ENCODE measurements at regions of chr13 and their contacts with region 1.

Region 1: GRCh38 chr13:30341815-30342570 is 34.6 kb upstream of the KATNAL1 start:
- DNase-seq: peak; percentile 81
- ATAC-seq: peak; percentile 84 to 93 (median 88)
- H3K4me3 ChIP-seq: no peak overlapping the region
- H3K27ac ChIP-seq: peak overlapping the region; percentile 10 to 89 (median 77)
- H3K4me1 ChIP-seq: peaks cover 2 to 46% (median 32%) of the 10 kb centered on the region in 9 donors
- H3K27me3 ChIP-seq: no peaks in the 10 kb centered on the region
- CTCF ChIP-seq: no peak

Region 2: DNA sequence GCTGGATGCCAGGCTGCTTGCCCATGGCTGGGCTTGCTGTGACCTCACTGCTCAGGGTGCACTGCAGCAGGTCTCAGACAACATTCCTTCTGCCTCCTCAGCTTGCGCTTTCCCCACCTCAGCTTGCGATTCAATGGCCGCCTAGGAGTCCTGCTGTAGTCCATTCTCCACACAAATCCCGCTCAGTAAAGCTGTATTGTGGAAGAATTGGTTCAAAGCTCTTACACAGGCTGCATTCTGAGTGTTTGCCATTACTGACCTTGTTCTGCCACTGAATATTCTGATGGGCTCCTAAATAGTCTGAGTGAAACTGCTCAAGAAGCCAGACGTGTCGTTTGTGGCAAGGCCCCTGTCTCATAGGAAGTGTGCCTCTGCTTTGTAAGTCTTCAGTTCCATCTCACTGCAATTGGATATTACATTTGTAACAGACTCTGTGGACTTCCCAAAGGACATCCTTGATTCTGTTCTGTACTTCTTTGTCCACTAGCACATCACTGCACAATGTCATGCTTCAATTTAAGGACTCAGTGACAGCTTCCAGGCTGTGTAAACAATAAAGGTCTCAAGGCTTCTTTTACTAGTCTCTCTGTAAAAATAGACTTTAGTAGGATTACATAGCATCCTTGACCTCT is 84.4 kb before region 1 on chr13:
- intact Hi-C with region 1: loop called in 1 of 10 experiments (anchors 2 kb)
- DNase-seq: peak in 1 of 2 donors; percentile 3
- ATAC-seq: peak; percentile 25 to 92 (median 76)
- H3K4me3 ChIP-seq: no peak overlapping the region
- H3K27ac ChIP-seq: peak overlapping the region in 6 of 10 donors; percentile 13 to 70 (median 32)
- H3K4me1 ChIP-seq: peaks cover 0 to 22% (median 9%) of the 10 kb centered on the region in 9 donors
- H3K27me3 ChIP-seq: no peaks in the 10 kb centered on the region
- CTCF ChIP-seq: no peak

Region 3: DNA sequence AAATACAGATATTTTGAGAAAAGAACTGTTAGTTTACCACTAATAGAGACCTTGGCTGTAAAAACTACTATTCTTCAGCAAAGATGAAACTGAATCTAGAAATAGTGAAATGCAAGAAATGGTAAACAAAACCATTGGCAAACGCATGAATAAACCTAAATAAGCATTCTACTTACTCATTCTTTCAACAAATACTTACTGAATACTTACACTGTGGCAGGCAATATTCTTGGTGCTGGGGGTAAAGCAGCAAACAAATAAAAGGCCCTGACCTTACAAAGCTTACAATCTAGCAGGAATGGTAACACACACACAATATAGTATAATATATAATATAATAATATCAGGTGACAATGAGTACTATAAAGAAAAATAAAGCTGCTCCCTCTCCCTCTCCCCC is 73.3 kb before region 1 on chr13:
- intact Hi-C with region 1: no loop called
- DNase-seq: no peak
- ATAC-seq: no peak
- H3K4me3 ChIP-seq: no peak overlapping the region
- H3K27ac ChIP-seq: no peak overlapping the region
- H3K4me1 ChIP-seq: peaks cover 0 to 8% (median 0%) of the 10 kb centered on the region in 9 donors
- H3K27me3 ChIP-seq: no peaks in the 10 kb centered on the region
- CTCF ChIP-seq: no peak